ENCODE measurements at regions of chr6 and their contacts with region 1.

Region 1: GRCh38 chr6:158649289-158650143 is at the start of gene SYTL3:
- DNase-seq: peak; percentile 94
- ATAC-seq: peak; percentile 60
- H3K4me3 Mint-ChIP-seq: peak within 1 kb of the TSS; percentile 83
- H3K27ac Mint-ChIP-seq: peak within 1 kb of the TSS; percentile 97
- H3K4me1 Mint-ChIP-seq: peaks cover 68% of the 10 kb centered on the region
- H3K27me3 Mint-ChIP-seq: peaks cover 2% of the 10 kb centered on the region
- CTCF ChIP-seq: no peak
- total RNA-seq, gene SYTL3: 151 to 163 TPM

Region 2: GRCh38 chr6:158631678-158632537 is 17.6 kb before region 1 on chr6:
- CTCF ChIA-PET with region 1: no interaction called
- POLR2A ChIA-PET with region 1: interaction called, 112 read pairs
- intact Hi-C with region 1: no loop called
- DNase-seq: no peak
- ATAC-seq: no peak
- H3K4me3 Mint-ChIP-seq: no peak overlapping the region
- H3K27ac Mint-ChIP-seq: peak overlapping the region; percentile 77
- H3K4me1 Mint-ChIP-seq: peaks cover 50% of the 10 kb centered on the region
- H3K27me3 Mint-ChIP-seq: no peaks in the 10 kb centered on the region
- CTCF ChIP-seq: no peak

Region 3: DNA sequence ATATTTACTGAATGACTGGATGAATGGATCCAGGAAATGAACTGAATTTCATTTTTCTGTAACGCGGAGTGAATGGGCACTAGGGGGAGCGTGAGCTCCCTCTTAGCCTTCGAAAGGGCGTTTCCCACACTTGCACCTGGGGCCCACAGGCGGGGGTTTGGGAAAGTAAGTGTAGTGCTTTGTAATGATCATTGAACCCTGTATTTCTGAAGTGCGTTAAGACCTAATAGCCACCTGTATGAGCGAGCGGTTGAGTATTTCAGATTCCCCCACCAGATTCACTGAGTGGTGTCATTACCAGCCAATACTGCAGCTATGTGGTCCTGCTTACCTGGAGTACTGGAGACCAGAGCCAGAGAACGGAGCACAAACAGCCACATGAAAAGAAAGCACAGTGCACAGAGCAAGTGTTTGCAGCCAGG is 10.8 kb after region 1 on chr6:
- CTCF ChIA-PET with region 1: interaction called, 21 read pairs
- POLR2A ChIA-PET with region 1: interaction called, 112 read pairs
- intact Hi-C with region 1: no loop called
- DNase-seq: peak; percentile 58
- ATAC-seq: peak; percentile 69
- H3K4me3 Mint-ChIP-seq: no peak overlapping the region
- H3K27ac Mint-ChIP-seq: peak overlapping the region; percentile 11
- H3K4me1 Mint-ChIP-seq: peaks cover 54% of the 10 kb centered on the region
- H3K27me3 Mint-ChIP-seq: no peaks in the 10 kb centered on the region
- CTCF ChIP-seq: peak; percentile 74

Measured in activated CD8-positive, alpha-beta T cell treated with anti-CD3 and anti-CD28 coated beads for 36 hours (primary cell).